Gastrocnemius medialis (tissue), 4 donors: ENCODE measurements at regions of chr2 and their contacts with region 1.

Region 1: DNA sequence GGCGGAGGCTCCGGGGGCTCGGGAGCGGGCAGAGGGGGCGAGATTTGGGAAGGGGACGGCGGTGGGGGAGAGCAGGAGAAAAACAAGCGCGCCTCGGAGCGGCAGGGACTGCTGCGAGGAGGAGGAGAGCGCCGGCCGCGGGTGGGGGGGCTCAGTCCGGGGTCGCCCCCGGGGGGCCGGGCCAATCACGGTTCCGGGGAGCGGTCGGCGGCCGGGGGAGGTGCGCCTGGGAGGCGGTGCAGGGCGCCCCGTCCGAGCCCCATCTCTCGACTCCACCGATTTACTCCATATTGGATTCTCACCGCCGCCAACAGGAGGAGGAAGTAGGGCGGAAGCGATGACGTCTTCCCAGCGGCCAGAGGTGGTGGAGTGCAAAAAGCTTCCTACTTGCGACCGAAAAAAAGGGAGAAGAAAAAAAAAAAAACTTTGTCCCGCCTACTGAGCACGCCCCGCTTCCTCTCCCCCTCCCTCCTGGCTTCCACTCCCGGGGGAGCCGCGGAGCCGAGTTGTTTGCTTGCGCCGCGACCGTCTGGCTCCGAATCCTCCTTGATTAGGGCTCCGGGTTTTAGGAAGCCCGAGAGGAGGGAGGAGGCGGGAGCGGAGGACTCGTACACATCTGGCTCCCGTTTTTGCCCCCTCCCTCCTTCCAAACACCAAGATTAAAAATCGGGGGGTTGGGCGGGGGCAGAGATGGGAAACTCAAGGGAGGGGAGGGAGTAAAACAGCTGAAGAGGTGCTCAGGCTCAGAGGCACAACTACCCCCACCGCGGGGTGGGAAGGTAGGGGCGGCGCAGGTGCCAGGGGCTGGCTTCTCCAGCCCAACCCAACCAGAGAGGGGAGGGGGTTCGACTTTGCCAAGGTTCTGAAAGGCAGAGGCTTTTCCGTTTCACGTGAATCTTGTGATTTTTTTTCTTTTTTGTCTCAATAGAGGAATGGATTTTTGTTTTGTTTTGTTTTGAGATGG is at the start of gene SPRED2:
- DNase-seq: peak; percentile 85 to 89
- ATAC-seq: peak; percentile 42 to 44
- H3K4me3 ChIP-seq: peak within 1 kb of the TSS; percentile 79 to 88 (median 84)
- H3K27ac ChIP-seq: peak within 1 kb of the TSS; percentile 75 to 88 (median 84)
- H3K4me1 ChIP-seq: peaks cover 22 to 23% of the 10 kb centered on the region in 2 donors
- H3K27me3 ChIP-seq: no peaks in the 10 kb centered on the region
- CTCF ChIP-seq: peak in 1 of 5 experiments; percentile 25
- POLR2A ChIP-seq: peak; percentile 70 to 81
- total RNA-seq, gene SPRED2: 4.1 to 12.5 (median 7.4) TPM

Region 2: GRCh38 chr2:64179582-64180321 is 1252.8 kb before region 1 on chr2:
- in situ Hi-C with region 1: no loop called
- intact Hi-C with region 1: no loop called
- DNase-seq: no peak
- ATAC-seq: no peak
- H3K4me3 ChIP-seq: no peak overlapping the region
- H3K27ac ChIP-seq: no peak overlapping the region
- H3K4me1 ChIP-seq: peaks cover 0 to 3% of the 10 kb centered on the region in 2 donors
- H3K27me3 ChIP-seq: no peaks in the 10 kb centered on the region
- CTCF ChIP-seq: no peak
- POLR2A ChIP-seq: no peak

Region 3: GRCh38 chr2:64859312-64860212 is 572.9 kb before region 1 on chr2:
- in situ Hi-C with region 1: no loop called
- intact Hi-C with region 1: loop called (anchors 10 kb)
- DNase-seq: peak; percentile 93 to 98
- ATAC-seq: peak; percentile 85 to 86
- H3K4me3 ChIP-seq: peak overlapping the region; percentile 55 to 74 (median 58)
- H3K27ac ChIP-seq: peak overlapping the region; percentile 87 to 98 (median 96)
- H3K4me1 ChIP-seq: peaks cover 26 to 38% of the 10 kb centered on the region in 2 donors
- H3K27me3 ChIP-seq: no peaks in the 10 kb centered on the region
- CTCF ChIP-seq: peak in 2 of 5 experiments; percentile 8 to 26
- POLR2A ChIP-seq: peak; percentile 32 to 54

Region 4: GRCh38 chr2:65056215-65057053 is 376.1 kb before region 1 on chr2 and contains the start of gene CEP68:
- in situ Hi-C with region 1: loop called in 1 of 4 experiments (anchors 25 kb)
- intact Hi-C with region 1: no loop called
- DNase-seq: peak; percentile 98
- ATAC-seq: peak; percentile 93
- H3K4me3 ChIP-seq: peak within 1 kb of the TSS; percentile 70 to 90 (median 86)
- H3K27ac ChIP-seq: peak within 1 kb of the TSS; percentile 90 to 96 (median 92)
- H3K4me1 ChIP-seq: peaks cover 48 to 50% of the 10 kb centered on the region in 2 donors
- H3K27me3 ChIP-seq: no peaks in the 10 kb centered on the region
- CTCF ChIP-seq: peak in 3 of 5 experiments; percentile 9 to 26 (median 19)
- POLR2A ChIP-seq: peak; percentile 96 to 99
- total RNA-seq, gene CEP68: 21.4 to 48.0 (median 35.2) TPM

Region 5: DNA sequence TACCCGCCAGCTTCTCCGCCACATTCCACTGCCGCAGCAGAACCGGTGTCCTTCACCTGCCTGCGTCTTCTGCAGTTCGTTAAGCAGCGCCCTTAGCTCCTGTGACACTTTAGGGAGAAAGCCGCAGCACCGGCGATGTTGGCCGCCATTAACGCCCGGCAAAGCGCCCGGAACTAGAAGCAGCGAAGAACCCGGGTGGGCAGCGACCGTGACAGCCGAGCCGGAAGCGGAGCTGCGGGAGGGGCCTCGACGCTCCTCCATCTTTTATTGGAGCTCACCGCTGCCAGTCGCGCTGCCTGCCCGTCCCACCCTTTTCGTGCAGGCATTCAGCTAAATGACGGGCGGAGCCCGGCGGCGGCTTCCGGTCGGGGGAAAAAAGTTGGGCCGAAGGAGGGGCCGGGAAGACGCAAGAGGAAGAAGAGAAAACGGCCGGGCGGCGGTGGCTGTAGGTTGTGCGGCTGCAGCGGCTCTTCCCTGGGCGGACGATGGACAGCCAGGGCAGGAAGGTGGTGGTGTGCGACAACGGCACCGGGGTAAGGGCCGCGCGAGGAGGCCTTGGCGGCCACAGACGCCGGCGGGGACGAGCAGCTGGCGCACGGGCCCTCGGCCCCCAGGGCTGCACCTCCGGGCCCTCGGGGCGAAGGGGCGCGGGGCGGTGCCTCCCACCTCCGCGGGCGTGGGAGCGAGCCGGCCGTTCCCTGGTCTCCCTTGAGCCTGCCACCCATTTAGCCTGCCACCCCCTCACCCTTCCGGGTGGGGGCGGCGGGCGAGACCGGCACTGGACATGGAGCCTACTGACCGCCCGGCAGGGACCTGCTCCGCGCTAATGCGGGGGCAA is 204.9 kb before region 1 on chr2 and contains the start of gene ACTR2:
- in situ Hi-C with region 1: no loop called
- intact Hi-C with region 1: loop called (anchors 1 kb)
- DNase-seq: peak; percentile 94 to 96
- ATAC-seq: peak; percentile 92 to 94
- H3K4me3 ChIP-seq: peak within 1 kb of the TSS; percentile 87 to 95 (median 92)
- H3K27ac ChIP-seq: peak within 1 kb of the TSS; percentile 92 to 99 (median 98)
- H3K4me1 ChIP-seq: peaks cover 24 to 26% of the 10 kb centered on the region in 2 donors
- H3K27me3 ChIP-seq: no peaks in the 10 kb centered on the region
- CTCF ChIP-seq: no peak
- POLR2A ChIP-seq: peak; percentile 87 to 90
- total RNA-seq, gene ACTR2: 34.4 to 43.9 (median 35.8) TPM

Region 6: DNA sequence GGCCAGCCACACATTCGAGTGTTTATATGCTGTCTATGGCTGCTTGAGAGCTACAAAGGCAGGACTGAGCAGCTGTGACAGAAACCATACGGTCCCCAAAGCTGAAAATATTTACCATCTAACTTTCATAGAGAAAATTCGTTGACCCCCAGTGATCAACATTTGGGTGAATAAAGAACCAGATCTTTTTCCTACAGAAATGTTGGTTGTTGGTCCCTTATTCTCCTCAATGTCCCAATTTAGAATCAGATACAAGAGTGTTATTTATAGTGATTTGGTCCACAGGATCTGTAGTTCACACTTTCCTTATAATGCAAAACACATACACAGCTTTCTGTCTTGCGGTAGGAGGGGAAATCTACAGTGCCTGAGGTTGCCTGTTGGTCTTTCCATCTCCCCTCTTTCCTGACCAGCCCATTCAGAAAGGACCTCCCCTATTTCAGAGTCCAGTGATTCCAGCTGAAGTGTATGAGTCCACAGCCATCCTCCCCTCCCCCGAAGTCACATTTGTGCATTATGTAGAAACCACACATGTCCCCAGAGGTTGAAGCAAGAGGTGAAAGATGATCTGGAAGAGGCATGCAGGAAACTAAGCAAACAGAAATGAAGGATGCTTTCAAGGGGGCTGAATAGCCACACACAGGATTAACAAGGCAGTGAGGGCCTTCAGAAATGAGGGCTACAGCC is 62.0 kb before region 1 on chr2:
- in situ Hi-C with region 1: no loop called
- intact Hi-C with region 1: loop called (anchors 5 kb)
- DNase-seq: peak in 1 of 2 donors; percentile 33
- ATAC-seq: peak; percentile 57 to 77
- H3K4me3 ChIP-seq: no peak overlapping the region
- H3K27ac ChIP-seq: peak overlapping the region in 3 of 4 donors; percentile 41 to 58 (median 46)
- H3K4me1 ChIP-seq: peaks cover 18 to 34% of the 10 kb centered on the region in 2 donors
- H3K27me3 ChIP-seq: no peaks in the 10 kb centered on the region
- CTCF ChIP-seq: no peak
- POLR2A ChIP-seq: no peak